RWPE1 (cell line): ENCODE measurements at regions of chr10 and their contacts with region 1.

Region 1: DNA sequence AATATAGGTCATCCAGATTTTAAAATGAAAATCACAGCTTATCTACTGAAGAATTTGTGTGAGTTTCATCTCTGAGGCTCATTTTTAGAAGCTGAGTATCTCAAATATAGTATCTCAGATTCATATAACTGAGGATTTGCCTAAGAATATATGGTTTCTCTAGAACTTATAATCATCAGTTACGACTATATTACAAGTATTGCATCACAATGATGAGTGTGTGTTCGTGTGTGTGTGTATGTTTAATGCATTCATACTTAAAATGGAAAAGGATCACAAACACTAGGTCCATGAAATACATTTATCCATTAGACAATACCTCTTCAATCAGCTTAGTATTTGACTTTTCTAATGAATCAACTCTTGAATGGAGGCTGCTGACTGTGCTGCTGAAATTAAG is 21.3 kb downstream of the RUFY2 start:
- DNase-seq: no peak
- H3K27ac ChIP-seq: no peak overlapping the region
- CTCF ChIP-seq: no peak

Region 2: GRCh38 chr10:68406815-68407548 is 21.2 kb after region 1 on chr10 and contains the start of gene RUFY2:
- CTCF ChIA-PET with region 1: interaction called, 13 read pairs
- POLR2A ChIA-PET with region 1: no interaction called
- DNase-seq: peak; percentile 83
- H3K27ac ChIP-seq: peak within 1 kb of the TSS; percentile 84
- CTCF ChIP-seq: peak; percentile 96